PC-3 (cell line): ENCODE measurements at regions of chr7 and their contacts with region 1.

Region 1: GRCh38 chr7:24401628-24402593 is 117.9 kb downstream of the NPY start:
- DNase-seq: peak; percentile 65
- ATAC-seq: peak; percentile 87
- H3K4me3 ChIP-seq: peak overlapping the region; percentile 61
- H3K27ac ChIP-seq: no peak overlapping the region
- H3K4me1 ChIP-seq: 0 out of 2 replicates have a peak, but pooled peaks cover 5% of the 10 kb centered on the region
- H3K27me3 ChIP-seq: peaks cover 9% of the 10 kb centered on the region; the same call in 1 of the 2 replicates
- CTCF ChIP-seq: peak; percentile 68

Region 2: GRCh38 chr7:24202150-24202549 is 199.8 kb before region 1 on chr7:
- CTCF ChIA-PET with region 1: no interaction called
- POLR2A ChIA-PET with region 1: no interaction called
- intact Hi-C with region 1: no loop called
- DNase-seq: no peak
- ATAC-seq: no peak
- H3K4me3 ChIP-seq: no peak overlapping the region
- H3K27ac ChIP-seq: no peak overlapping the region
- H3K4me1 ChIP-seq: no peaks in the 10 kb centered on the region
- H3K27me3 ChIP-seq: peaks cover 5% of the 10 kb centered on the region; the same call in 1 of the 2 replicates
- CTCF ChIP-seq: no peak

Region 3: GRCh38 chr7:24587848-24588247 is 185.9 kb after region 1 on chr7:
- CTCF ChIA-PET with region 1: no interaction called
- POLR2A ChIA-PET with region 1: no interaction called
- intact Hi-C with region 1: loop called (anchors 1 kb)
- DNase-seq: peak; percentile 33
- ATAC-seq: peak; percentile 73
- H3K4me3 ChIP-seq: no peak overlapping the region
- H3K27ac ChIP-seq: no peak overlapping the region
- H3K4me1 ChIP-seq: no peaks in the 10 kb centered on the region
- H3K27me3 ChIP-seq: no peaks in the 10 kb centered on the region
- CTCF ChIP-seq: peak; percentile 63

Region 4: DNA sequence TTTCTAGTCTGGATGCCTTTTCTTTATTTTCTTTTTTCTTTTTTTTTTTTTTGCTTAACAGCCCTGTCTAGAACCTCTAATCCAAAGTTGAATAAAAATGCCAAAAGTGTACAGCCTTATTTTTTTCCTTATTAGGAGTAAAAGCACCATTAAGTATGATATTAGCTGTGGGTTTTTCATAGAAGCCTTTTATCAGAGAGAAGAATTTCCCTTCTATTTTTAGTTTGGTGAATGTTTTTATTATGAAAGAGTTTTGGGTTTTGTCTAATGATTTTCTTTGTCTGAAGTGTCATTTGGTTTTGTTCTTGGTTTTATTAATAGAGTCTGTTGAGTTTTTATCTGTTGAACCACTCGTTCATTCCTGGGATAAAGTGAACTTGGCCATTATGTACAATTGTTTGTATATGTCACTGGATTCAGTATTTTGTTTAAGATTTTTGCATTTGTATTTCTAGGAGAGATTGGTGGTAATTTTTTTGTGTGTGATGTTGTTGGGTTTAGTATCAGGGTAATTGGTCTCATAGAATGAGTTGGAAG is 220.8 kb after region 1 on chr7:
- CTCF ChIA-PET with region 1: no interaction called
- POLR2A ChIA-PET with region 1: no interaction called
- intact Hi-C with region 1: no loop called
- DNase-seq: no peak
- ATAC-seq: no peak
- H3K4me3 ChIP-seq: no peak overlapping the region
- H3K27ac ChIP-seq: no peak overlapping the region
- H3K4me1 ChIP-seq: no peaks in the 10 kb centered on the region
- H3K27me3 ChIP-seq: no peaks in the 10 kb centered on the region
- CTCF ChIP-seq: no peak

Region 5: DNA sequence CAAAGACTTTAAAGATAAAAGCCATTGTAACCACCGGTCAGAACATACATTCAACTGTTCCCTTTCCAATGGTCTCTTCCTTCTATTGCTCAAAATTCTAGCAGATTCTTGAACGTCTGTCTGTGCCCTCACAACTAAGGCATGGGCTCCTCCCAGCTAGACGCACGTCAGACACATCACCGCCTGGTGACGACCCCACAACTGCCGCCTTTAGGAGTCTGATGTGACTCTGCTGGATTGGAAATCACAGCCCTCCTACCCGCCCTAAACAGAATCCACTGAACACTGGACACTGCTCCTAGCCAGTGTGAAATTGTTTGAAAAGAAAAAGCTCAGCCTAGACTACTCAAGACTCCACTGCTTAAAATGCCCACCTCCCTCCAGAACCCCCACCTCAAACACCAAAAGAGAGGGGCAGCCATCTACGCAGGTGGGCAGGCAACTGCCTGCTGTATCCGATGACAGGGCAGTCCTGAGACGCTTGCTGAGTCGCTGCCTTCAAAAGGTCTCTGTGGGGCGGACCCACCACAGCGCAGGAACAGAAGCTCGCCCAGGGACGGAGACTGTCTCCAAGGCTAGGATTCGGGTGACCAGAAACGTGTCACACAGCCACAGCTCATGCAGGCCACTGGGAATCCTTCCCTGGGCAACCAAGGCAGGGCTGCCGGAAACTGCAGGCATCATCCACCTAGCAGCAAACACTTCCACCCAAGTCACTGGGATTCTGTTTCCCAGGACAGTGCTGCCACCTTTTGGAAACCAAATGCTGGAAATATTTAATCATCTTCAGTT is 320.7 kb after region 1 on chr7:
- CTCF ChIA-PET with region 1: no interaction called
- POLR2A ChIA-PET with region 1: no interaction called
- intact Hi-C with region 1: loop called (anchors 1 kb)
- DNase-seq: peak; percentile 54
- ATAC-seq: peak; percentile 59
- H3K4me3 ChIP-seq: no peak overlapping the region
- H3K27ac ChIP-seq: peak overlapping the region; percentile 43; the same call in 1 of the 2 replicates
- H3K4me1 ChIP-seq: peaks cover 12% of the 10 kb centered on the region
- H3K27me3 ChIP-seq: no peaks in the 10 kb centered on the region
- CTCF ChIP-seq: peak; percentile 53